ENCODE measurements at regions of chr15 and their contacts with region 1.

Region 1: DNA sequence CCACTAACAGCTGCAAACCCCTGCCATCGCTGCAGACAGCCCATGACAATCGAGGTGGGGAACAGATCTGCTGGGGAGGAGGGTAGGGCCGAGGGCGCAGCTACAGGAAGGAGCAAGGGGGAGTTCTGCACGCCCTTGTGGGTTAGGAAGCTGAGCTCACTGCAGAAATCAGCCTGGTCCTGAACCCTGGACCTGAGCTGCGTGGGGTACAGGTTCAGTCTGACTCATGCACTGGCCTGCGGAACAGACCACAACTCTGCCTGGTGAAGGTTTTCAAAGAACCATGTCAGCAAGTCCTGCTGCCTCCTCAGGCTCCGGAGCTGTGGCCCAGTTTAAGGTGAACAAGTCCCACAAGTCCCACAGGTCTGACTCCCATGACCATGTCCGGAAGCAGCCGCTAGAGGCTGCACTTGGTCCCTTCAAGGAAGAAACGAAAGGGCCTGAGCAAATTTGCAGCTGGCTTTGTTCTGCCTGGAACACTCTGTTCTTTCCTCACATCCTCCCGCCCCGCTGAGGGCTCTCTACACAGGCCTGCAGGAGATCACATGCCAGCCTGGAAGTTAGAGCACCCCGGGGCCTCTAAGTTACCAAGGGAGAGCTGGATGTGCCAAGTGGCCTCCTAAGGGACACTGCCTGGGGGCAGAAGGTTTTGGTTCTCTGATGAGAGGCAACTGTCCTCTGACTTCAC is 49.4 kb upstream of the AKAP13 start:
- DNase-seq: peak; percentile 37 to 86 (median 71)
- ATAC-seq: peak; percentile 77
- H3K4me3 ChIP-seq: peak overlapping the region; percentile 42 to 55
- H3K4me3 Mint-ChIP-seq: peak overlapping the region; percentile 92
- H3K27ac ChIP-seq: peak overlapping the region; percentile 14 to 58
- H3K27ac Mint-ChIP-seq: peak overlapping the region; percentile 93
- H3K4me1 ChIP-seq: peaks cover 26% of the 10 kb centered on the region
- H3K4me1 Mint-ChIP-seq: peaks cover 48% of the 10 kb centered on the region
- H3K27me3 ChIP-seq: no peaks in the 10 kb centered on the region
- H3K27me3 Mint-ChIP-seq: no peaks in the 10 kb centered on the region
- CTCF ChIP-seq: peak; percentile 43

Region 2: DNA sequence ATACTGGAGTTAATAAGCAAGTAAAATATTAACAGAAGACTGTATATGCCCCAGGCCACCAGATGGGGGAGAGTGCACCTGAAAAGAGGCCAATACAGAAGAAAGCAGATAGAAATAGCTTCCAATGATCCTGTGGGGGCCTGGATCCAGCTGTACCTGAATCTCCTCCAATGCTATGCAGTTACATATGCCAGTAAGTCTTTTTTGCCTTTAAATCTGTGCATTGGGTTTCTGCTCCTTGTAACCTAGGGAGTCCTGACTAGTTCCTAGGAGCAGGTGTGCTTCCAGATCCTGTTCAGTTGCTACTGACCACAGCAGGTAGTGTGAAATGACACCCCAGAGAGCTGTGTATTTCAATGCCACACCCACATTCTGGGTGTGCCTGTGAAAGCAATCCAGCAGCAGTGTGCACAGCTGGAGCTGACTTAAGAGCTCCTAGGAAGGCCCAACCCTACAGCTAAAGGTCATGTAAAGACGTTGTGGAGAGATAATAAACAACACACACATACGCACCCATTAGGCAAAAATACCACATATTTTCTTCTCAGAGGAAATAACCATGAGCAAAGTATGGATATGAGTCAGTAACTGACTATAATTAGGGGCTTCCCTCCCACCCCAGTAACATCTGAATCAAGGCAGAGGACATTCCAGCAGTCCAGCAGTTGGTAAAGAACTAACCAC is 12.9 kb before region 1 on chr15:
- CTCF ChIA-PET with region 1: interaction called, 11 read pairs
- POLR2A ChIA-PET with region 1: interaction called, 5 read pairs
- intact Hi-C with region 1: loop called in 1 of 2 experiments (anchors 2 kb)
- DNase-seq: peak in 3 of 9 experiments; percentile 14 to 45 (median 38)
- ATAC-seq: peak; percentile 77
- H3K4me3 ChIP-seq: no peak overlapping the region
- H3K4me3 Mint-ChIP-seq: no peak overlapping the region
- H3K27ac ChIP-seq: no peak overlapping the region
- H3K27ac Mint-ChIP-seq: peak overlapping the region; percentile 53
- H3K4me1 ChIP-seq: peaks cover 24% of the 10 kb centered on the region
- H3K4me1 Mint-ChIP-seq: peaks cover 31% of the 10 kb centered on the region
- H3K27me3 ChIP-seq: no peaks in the 10 kb centered on the region
- H3K27me3 Mint-ChIP-seq: no peaks in the 10 kb centered on the region
- CTCF ChIP-seq: no peak

Region 3: DNA sequence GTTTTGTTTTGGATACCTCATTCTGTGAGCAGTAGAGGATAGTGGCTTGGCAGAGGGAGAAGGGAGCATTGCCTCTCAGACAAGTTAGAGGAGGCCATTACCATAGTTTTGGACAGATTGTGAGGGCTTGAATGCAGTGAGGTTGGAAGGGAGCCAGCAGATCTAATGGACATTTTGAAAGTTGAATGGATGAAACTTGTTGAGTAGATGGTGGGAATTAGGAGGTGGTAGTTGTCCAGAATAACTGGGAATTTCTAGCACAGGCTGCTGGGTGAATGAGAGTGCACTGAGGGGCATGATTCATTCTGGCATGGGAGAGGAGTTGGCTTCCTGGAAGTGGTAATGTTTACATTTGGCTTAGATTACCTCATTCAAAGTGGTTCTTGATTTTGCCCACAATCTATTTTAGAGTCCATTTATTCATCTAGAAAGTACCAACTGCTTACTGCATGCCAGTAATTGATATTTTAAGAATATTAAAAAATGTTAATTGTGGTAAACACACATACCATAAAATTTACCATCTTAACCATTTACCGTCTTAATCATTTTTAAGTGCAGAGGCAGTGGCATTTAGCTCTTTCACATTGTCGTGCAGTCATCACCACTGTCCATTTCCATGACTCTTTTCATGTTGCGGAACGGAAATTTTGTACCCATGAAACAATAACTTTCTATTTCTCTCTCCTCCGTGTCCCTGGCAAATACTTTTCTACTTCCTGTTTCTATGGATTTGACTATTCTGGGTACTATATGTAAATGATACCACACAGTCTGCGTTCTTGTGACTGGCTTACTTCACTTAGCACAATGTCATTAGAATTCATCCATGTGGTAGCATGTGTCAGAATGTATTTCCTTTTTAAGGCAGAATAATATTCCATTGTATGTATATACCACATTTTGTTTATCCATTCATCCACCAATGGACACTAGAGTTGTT is 77.0 kb after region 1 on chr15:
- CTCF ChIA-PET with region 1: interaction called, 75 read pairs
- POLR2A ChIA-PET with region 1: interaction called, 9 read pairs
- intact Hi-C with region 1: loop called in 1 of 2 experiments (anchors 5 kb)
- DNase-seq: peak in 4 of 9 experiments; percentile 7 to 64 (median 32)
- ATAC-seq: peak; percentile 73
- H3K4me3 ChIP-seq: no peak overlapping the region
- H3K4me3 Mint-ChIP-seq: peak overlapping the region; percentile 30
- H3K27ac ChIP-seq: peak overlapping the region in 1 of 2 experiments; percentile 26
- H3K27ac Mint-ChIP-seq: peak overlapping the region; percentile 71
- H3K4me1 ChIP-seq: peaks cover 51% of the 10 kb centered on the region
- H3K4me1 Mint-ChIP-seq: peaks cover 79% of the 10 kb centered on the region
- H3K27me3 ChIP-seq: no peaks in the 10 kb centered on the region
- H3K27me3 Mint-ChIP-seq: no peaks in the 10 kb centered on the region
- CTCF ChIP-seq: no peak

Region 4: GRCh38 chr15:85412956-85413854 is 82.2 kb after region 1 on chr15:
- CTCF ChIA-PET with region 1: interaction called, 75 read pairs
- POLR2A ChIA-PET with region 1: interaction called, 9 read pairs
- intact Hi-C with region 1: loop called (anchors 1 to 5 kb)
- DNase-seq: peak; percentile 42 to 86 (median 75)
- ATAC-seq: peak; percentile 95
- H3K4me3 ChIP-seq: peak overlapping the region in 1 of 2 experiments; percentile 12
- H3K4me3 Mint-ChIP-seq: peak overlapping the region; percentile 56
- H3K27ac ChIP-seq: peak overlapping the region in 1 of 2 experiments; percentile 77
- H3K27ac Mint-ChIP-seq: peak overlapping the region; percentile 89
- H3K4me1 ChIP-seq: peaks cover 26% of the 10 kb centered on the region
- H3K4me1 Mint-ChIP-seq: peaks cover 65% of the 10 kb centered on the region
- H3K27me3 ChIP-seq: no peaks in the 10 kb centered on the region
- H3K27me3 Mint-ChIP-seq: no peaks in the 10 kb centered on the region
- CTCF ChIP-seq: no peak

Region 5: DNA sequence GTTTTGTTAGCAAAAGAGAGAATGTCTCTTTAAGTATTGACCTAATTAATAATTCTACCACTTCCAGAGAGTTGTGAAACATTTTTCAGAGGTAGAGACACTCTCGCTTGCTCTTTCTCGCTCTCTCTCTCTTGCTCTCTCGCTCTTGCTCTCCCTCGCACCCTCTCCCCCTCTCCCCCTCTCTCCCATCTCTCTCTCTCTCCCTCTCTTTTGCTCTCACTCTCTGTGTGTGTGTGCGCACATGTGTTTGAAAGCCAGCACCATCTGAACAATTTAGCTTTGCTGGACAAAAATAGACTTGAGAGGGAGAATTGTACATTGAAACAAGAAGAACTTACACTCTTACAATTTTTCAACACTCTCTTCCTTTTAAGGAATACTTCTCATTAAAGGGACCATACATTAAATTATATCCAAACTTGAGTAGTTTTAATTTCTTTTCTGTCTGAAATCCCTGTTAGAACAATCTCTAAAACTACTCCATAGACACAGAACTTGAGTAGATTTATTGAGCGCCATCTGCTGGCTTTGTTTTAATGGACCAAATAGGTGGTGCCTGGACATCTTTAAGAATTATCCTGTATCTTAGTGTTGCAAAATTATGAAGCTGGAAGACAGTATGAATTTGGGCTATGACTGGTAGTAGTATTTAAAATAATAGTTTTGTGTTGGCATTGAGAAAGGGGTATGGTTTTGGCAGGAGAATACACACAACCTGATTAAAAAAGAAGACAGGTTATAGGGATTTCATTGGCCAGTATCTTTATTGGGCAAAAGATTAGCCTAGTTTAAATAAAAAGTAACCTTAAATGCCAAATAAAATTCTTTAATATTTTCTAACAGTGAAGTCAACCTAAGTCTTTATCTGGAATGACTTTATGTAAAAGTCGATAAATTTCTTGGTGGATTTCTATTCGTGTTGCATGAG is 174.0 kb after region 1 on chr15:
- CTCF ChIA-PET with region 1: interaction called, 10 read pairs
- POLR2A ChIA-PET with region 1: no interaction called
- intact Hi-C with region 1: loop called in 1 of 2 experiments (anchors 10 kb)
- DNase-seq: peak in 7 of 9 experiments; percentile 11 to 70 (median 51)
- ATAC-seq: no peak
- H3K4me3 ChIP-seq: no peak overlapping the region
- H3K4me3 Mint-ChIP-seq: no peak overlapping the region
- H3K27ac ChIP-seq: no peak overlapping the region
- H3K27ac Mint-ChIP-seq: no peak overlapping the region
- H3K4me1 ChIP-seq: peaks cover 33% of the 10 kb centered on the region
- H3K4me1 Mint-ChIP-seq: peaks cover 69% of the 10 kb centered on the region
- H3K27me3 ChIP-seq: no peaks in the 10 kb centered on the region
- H3K27me3 Mint-ChIP-seq: no peaks in the 10 kb centered on the region
- CTCF ChIP-seq: peak; percentile 84

Region 6: DNA sequence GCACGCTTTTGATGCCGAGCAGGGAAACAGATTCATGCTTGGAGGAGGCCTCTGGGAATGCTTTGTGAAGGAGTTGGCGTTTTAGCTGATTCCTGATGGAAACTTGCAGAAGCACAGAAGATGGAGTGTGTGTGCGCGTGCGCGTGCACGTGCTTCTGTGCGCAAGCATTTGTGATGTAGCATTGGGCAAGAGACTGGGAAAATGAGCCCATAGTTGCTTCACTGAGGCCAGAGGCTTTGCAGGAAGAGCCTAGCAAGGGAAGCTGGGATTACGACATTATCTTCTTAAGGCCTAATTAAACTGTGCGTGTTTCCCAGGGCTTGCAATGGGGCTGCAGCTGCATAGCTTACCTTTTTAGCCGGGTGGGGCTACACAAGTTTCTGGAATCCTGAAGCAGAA is 730.5 kb after region 1 on chr15:
- CTCF ChIA-PET with region 1: no interaction called
- POLR2A ChIA-PET with region 1: no interaction called
- intact Hi-C with region 1: no loop called
- DNase-seq: no peak
- ATAC-seq: no peak
- H3K4me3 ChIP-seq: no peak overlapping the region
- H3K4me3 Mint-ChIP-seq: no peak overlapping the region
- H3K27ac ChIP-seq: no peak overlapping the region
- H3K27ac Mint-ChIP-seq: no peak overlapping the region
- H3K4me1 ChIP-seq: no peaks in the 10 kb centered on the region
- H3K4me1 Mint-ChIP-seq: no peaks in the 10 kb centered on the region
- H3K27me3 ChIP-seq: peaks cover 0 to 2% of the 10 kb centered on the region in 2 experiments
- H3K27me3 Mint-ChIP-seq: peaks cover 10% of the 10 kb centered on the region
- CTCF ChIP-seq: no peak